ENCODE measurements at regions of chr19 and their contacts with region 1.

Region 1: DNA sequence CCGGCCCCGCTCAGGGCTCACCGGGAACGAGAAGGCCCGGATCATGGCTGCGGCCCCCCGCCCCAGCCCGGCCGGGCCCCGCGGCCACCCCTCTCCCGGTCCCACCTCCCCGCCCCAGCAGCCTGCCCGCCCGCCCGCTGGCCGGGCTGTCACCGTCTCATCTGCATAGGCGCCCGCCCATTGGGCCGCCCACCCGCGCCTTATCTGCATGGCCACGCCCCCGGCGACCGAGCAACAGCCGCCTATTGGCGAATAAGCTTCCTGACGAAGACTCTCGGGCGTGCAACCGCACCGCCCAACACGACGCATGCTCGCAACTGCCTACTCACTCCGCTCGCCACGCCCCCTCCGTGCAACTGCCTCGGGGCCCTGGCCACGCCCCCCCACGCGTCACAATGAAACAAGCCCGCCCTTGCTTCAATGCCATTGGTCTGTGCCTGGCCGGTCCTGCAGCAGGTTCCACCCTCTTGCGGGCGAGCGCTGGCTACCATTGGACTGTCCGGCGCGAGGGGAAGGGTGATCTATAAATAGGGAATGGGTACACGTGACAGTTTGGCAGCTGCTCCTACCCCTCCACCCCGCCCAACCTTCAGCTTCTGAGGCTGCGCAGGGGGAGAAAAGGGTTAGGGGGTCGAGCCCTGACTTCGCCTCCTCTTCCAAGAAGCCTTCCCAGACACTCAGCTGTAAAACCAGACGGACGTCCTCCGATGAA is at the start of gene DACT3:
- DNase-seq: peak; percentile 99
- ATAC-seq: peak; percentile 97
- H3K4me3 ChIP-seq: peak within 1 kb of the TSS; percentile 59
- H3K27ac ChIP-seq: no peak within 1 kb of the TSS; the same call in 1 of the 2 replicates
- H3K4me1 ChIP-seq: peaks cover 22% of the 10 kb centered on the region
- H3K27me3 ChIP-seq: peaks cover 3% of the 10 kb centered on the region in 2 experiments; a peak in 3 of 4 replicates
- CTCF ChIP-seq: no peak
- EP300 ChIP-seq: no peak
- POLR2A ChIP-seq: no peak
- RAD21 ChIP-seq: no peak
- polyA plus RNA-seq, gene DACT3: 0.11 to 0.16 TPM

Region 2: DNA sequence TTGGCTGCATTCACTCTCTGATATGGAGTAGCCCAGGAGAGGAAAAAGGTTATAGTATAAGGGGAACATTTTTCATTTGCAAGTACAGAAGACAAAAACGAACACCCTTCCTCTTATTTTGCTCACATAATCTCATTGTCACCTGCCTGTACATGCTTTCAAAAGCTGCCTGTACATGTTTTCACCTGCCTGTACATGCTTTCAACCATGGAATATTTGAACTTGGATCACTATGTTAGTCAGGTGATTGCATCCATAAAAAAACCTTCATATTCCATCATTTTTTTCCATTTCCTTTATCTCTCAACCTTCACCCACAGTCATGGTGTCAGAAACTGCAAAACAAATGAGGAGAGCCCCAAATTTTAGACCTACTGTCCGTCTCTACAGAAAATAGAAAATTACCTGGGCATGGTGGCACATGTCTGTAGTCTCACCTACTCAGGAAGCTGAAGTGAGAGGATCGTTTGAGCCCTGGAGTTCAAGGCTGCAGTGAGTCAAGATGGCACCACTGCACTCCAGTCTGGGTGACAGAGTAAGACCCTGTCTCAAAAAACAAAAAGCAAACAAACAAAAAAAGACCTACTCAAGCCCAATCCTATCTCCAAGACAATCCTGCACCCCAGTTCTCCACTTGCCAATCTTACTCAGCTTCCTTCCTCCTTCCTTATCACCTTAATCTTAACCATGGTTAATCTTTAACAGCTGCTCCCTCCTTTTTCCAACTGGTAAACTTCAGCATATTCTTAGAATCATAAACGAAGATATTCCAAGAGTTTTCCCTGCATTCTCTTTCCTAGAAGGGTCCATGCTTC is 501.6 kb before region 1 on chr19:
- CTCF ChIA-PET with region 1: no interaction called
- POLR2A ChIA-PET with region 1: no interaction called
- RAD21 ChIA-PET with region 1: no interaction called
- SMC1A ChIA-PET with region 1: no interaction called
- in situ Hi-C with region 1: no loop called
- intact Hi-C with region 1: no loop called
- DNase-seq: no peak
- ATAC-seq: no peak
- H3K4me3 ChIP-seq: no peak overlapping the region
- H3K27ac ChIP-seq: no peak overlapping the region
- H3K4me1 ChIP-seq: no peaks in the 10 kb centered on the region
- H3K27me3 ChIP-seq: no peaks in the 10 kb centered on the region; a peak in 1 of 4 replicates
- CTCF ChIP-seq: no peak
- EP300 ChIP-seq: no peak
- POLR2A ChIP-seq: no peak
- RAD21 ChIP-seq: no peak

Region 3: DNA sequence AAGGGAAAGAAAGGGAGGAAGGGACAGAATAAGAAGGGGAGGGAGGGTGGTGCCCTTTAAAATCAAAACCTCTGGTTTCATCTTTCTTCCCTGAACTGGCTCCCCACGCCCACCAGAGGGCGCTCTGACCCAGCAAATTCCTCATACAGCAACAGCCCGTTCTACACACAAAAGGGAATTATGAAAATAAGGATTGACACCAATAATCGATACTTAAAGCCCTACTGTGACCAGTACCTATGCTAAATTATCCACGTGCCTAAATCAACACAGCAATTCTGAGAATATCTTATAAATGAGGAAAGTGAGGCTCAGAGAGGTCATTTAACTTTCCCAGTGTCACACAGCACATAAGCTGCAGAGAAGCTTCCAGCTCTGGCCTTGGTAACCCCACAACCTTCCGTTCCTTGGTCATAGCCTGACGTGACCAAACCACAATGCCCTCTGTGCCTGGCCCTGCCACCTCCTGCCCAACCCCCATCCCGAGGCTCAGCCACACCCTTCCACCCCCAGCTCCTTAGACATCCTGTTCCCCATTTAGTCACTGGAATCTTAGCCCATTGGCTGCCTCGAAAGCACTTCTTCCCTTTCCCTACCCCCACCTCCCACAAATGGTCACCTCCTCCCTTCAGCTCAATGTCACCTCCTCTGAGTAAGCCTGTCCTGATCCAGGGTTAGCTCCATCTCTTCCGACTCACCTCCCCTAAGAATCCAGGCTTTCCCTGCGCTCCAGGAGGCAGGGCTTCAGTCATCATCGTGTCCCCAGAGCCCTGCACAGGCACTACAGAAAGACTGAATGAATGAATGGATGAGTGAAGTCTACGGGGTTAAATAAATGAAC is 131.3 kb before region 1 on chr19:
- CTCF ChIA-PET with region 1: interaction called, 54 read pairs
- POLR2A ChIA-PET with region 1: no interaction called
- RAD21 ChIA-PET with region 1: interaction called, 32 read pairs
- SMC1A ChIA-PET with region 1: interaction called, 18 read pairs
- in situ Hi-C with region 1: loop called (anchors 5 kb)
- intact Hi-C with region 1: loop called (anchors 1 kb)
- DNase-seq: no peak
- ATAC-seq: peak; percentile 86
- H3K4me3 ChIP-seq: no peak overlapping the region
- H3K27ac ChIP-seq: no peak overlapping the region
- H3K4me1 ChIP-seq: peaks cover 4% of the 10 kb centered on the region
- H3K27me3 ChIP-seq: no peaks in the 10 kb centered on the region; a peak in 1 of 4 replicates
- CTCF ChIP-seq: peak; percentile 87 to 94 (median 90)
- EP300 ChIP-seq: no peak
- POLR2A ChIP-seq: no peak
- RAD21 ChIP-seq: peak; percentile 94

Region 4: GRCh38 chr19:46607448-46607841 is 53.7 kb before region 1 on chr19:
- CTCF ChIA-PET with region 1: interaction called, 434 read pairs
- POLR2A ChIA-PET with region 1: interaction called, 12 read pairs
- RAD21 ChIA-PET with region 1: interaction called, 245 read pairs
- SMC1A ChIA-PET with region 1: interaction called, 286 read pairs
- in situ Hi-C with region 1: loop called (anchors 5 kb)
- intact Hi-C with region 1: no loop called
- DNase-seq: no peak
- ATAC-seq: no peak
- H3K4me3 ChIP-seq: no peak overlapping the region
- H3K27ac ChIP-seq: no peak overlapping the region
- H3K4me1 ChIP-seq: peaks cover 32% of the 10 kb centered on the region
- H3K27me3 ChIP-seq: no peaks in the 10 kb centered on the region
- CTCF ChIP-seq: no peak
- EP300 ChIP-seq: no peak
- POLR2A ChIP-seq: no peak; the same call in 1 of the 2 replicates
- RAD21 ChIP-seq: no peak

Region 5: DNA sequence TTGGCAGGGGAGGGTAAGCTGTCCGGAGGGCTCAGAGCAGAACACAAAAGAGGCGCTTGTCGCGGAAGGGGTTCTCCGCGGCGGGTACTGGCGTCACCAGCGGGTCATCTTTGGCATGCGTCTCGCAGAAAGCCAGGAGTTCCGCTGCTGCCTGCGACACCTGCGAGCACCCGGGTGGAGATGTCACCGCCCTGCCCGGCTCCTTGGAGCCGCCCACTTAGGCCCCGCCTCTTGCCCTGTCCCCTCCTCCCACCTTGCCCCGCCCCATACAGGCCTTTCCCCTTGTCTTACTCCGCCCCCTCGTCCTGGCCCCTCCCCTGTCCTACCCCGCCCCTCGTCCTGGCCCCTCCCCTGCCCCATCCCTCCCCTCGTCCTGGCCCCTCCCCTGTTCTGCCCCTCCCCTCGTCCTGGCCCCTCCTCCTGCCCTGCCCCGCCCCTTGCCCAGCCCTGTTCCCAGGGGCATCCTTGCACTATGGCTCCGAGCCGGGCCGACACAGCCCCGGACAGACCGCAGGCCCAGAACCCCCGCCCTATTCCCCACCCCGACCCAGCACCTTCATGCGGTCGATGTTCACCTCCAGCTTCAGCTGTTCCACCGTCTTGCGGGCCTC is 27.0 kb before region 1 on chr19:
- CTCF ChIA-PET with region 1: interaction called, 18 read pairs
- POLR2A ChIA-PET with region 1: interaction called, 5 read pairs
- RAD21 ChIA-PET with region 1: interaction called, 18 read pairs
- SMC1A ChIA-PET with region 1: interaction called, 17 read pairs
- in situ Hi-C with region 1: no loop called
- intact Hi-C with region 1: no loop called
- DNase-seq: no peak
- ATAC-seq: peak; percentile 80
- H3K4me3 ChIP-seq: peak overlapping the region; percentile 63; the same call in 1 of the 2 replicates
- H3K27ac ChIP-seq: no peak overlapping the region
- H3K4me1 ChIP-seq: peaks cover 20% of the 10 kb centered on the region
- H3K27me3 ChIP-seq: peaks cover 0 to 3% of the 10 kb centered on the region in 2 experiments; a peak in 1 of 4 replicates
- CTCF ChIP-seq: no peak
- EP300 ChIP-seq: no peak
- POLR2A ChIP-seq: no peak
- RAD21 ChIP-seq: no peak

Region 6: DNA sequence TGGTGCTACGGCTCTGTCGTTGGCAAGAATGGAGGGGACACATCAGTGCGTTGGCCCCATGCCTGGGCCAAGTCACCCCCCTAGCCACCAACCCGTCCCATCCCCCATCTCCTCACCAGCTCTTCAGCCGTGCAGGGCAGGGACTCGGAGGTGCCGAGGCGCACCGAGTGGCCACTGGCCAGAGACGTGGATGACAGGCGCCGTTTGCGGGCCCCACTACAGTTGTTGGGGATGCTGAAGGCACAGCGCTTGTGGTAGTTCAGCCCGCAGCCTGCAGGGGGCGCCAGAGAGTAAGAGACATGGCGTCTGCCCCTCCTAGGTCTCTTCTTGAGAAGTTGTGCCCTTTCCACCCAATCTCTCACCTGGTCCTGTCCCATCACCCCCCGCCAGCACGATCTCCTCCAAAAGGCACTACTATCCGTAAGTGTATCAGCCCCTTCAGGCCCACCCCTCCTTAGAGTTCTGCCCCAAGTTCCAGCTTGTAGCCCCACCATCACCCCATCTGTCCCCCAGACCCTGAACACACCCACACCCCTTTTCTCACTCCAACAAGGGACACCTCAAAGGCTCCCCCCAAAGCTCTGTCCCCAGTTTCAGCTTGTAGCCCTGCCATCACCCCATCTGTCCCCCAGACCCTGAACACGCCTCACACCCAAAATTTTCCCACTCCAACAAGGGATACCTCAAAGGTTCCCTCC is 43.4 kb after region 1 on chr19:
- CTCF ChIA-PET with region 1: interaction called, 15 read pairs
- POLR2A ChIA-PET with region 1: no interaction called
- RAD21 ChIA-PET with region 1: no interaction called
- SMC1A ChIA-PET with region 1: interaction called, 3 read pairs
- in situ Hi-C with region 1: no loop called
- intact Hi-C with region 1: no loop called
- DNase-seq: no peak
- ATAC-seq: peak; percentile 98
- H3K4me3 ChIP-seq: no peak overlapping the region
- H3K27ac ChIP-seq: no peak overlapping the region
- H3K4me1 ChIP-seq: no peaks in the 10 kb centered on the region
- H3K27me3 ChIP-seq: no peaks in the 10 kb centered on the region
- CTCF ChIP-seq: peak; percentile 90 to 97 (median 90)
- EP300 ChIP-seq: no peak
- POLR2A ChIP-seq: peak; percentile 51
- RAD21 ChIP-seq: peak; percentile 60

Region 7: GRCh38 chr19:46753420-46754155 is 92.4 kb after region 1 on chr19:
- CTCF ChIA-PET with region 1: interaction called, 16 read pairs
- POLR2A ChIA-PET with region 1: no interaction called
- RAD21 ChIA-PET with region 1: interaction called, 5 read pairs
- SMC1A ChIA-PET with region 1: interaction called, 5 read pairs
- in situ Hi-C with region 1: no loop called
- intact Hi-C with region 1: no loop called
- DNase-seq: no peak
- ATAC-seq: peak; percentile 87
- H3K4me3 ChIP-seq: no peak overlapping the region
- H3K27ac ChIP-seq: no peak overlapping the region
- H3K4me1 ChIP-seq: no peaks in the 10 kb centered on the region
- H3K27me3 ChIP-seq: no peaks in the 10 kb centered on the region
- CTCF ChIP-seq: peak; percentile 73 to 76 (median 75)
- EP300 ChIP-seq: no peak
- POLR2A ChIP-seq: no peak
- RAD21 ChIP-seq: peak; percentile 58

Measured in GM12878 (cell line).